Activated CD4-positive, alpha-beta T cell treated with anti-CD3 and anti-CD28 coated beads for 36 hours (primary cell): ENCODE measurements at regions of chr2 and their contacts with region 1.

Region 1: GRCh38 chr2:110865188-110865587 is 132.8 kb downstream of the ACOXL start:
- DNase-seq: peak; percentile 67
- ATAC-seq: peak; percentile 80
- H3K4me3 Mint-ChIP-seq: no peak overlapping the region
- H3K27ac Mint-ChIP-seq: no peak overlapping the region
- H3K4me1 Mint-ChIP-seq: peaks cover 46% of the 10 kb centered on the region
- H3K27me3 Mint-ChIP-seq: peaks cover 54% of the 10 kb centered on the region

Region 2: GRCh38 chr2:110677530-110678456 is 187.4 kb before region 1 on chr2 and contains the start of gene BUB1:
- CTCF ChIA-PET with region 1: no interaction called
- POLR2A ChIA-PET with region 1: no interaction called
- intact Hi-C with region 1: loop called in 1 of 2 experiments (anchors 5 kb)
- DNase-seq: peak; percentile 98
- ATAC-seq: peak; percentile 99
- H3K4me3 Mint-ChIP-seq: peak within 1 kb of the TSS; percentile 96
- H3K27ac Mint-ChIP-seq: peak within 1 kb of the TSS; percentile 97
- H3K4me1 Mint-ChIP-seq: peaks cover 30% of the 10 kb centered on the region
- H3K27me3 Mint-ChIP-seq: peaks cover 4% of the 10 kb centered on the region
- total RNA-seq, gene BUB1: 93.5 to 115 TPM

Region 3: GRCh38 chr2:110804915-110805314 is 60.3 kb before region 1 on chr2:
- CTCF ChIA-PET with region 1: no interaction called
- POLR2A ChIA-PET with region 1: no interaction called
- intact Hi-C with region 1: loop called (anchors 1 to 5 kb)
- DNase-seq: peak; percentile 80
- ATAC-seq: peak; percentile 99
- H3K4me3 Mint-ChIP-seq: no peak overlapping the region
- H3K27ac Mint-ChIP-seq: no peak overlapping the region
- H3K4me1 Mint-ChIP-seq: peaks cover 15% of the 10 kb centered on the region
- H3K27me3 Mint-ChIP-seq: peaks cover 57% of the 10 kb centered on the region

Region 4: DNA sequence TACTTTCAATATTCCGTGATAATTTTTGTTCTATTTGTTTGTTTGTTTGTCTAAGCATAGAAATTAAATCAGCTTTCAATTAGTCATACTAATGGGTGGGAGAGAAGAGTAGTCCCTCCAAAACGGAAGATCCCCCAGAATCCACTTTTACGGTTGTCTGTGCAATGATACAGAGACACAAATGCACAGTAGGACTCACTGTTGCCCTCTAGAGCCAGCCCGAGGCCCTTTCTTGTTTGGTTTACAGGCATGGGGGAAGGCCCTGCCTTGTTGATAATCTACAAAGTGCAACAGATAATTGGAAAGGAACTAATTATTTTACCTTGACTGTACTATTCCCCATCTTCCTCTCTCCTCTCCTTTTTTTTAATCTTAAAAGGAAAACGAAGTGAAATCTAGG is 11.7 kb before region 1 on chr2:
- CTCF ChIA-PET with region 1: interaction called, 5 read pairs
- POLR2A ChIA-PET with region 1: interaction called, 7 read pairs
- intact Hi-C with region 1: loop called (anchors 1 to 2 kb)
- DNase-seq: peak; percentile 79
- ATAC-seq: peak; percentile 53
- H3K4me3 Mint-ChIP-seq: no peak overlapping the region
- H3K27ac Mint-ChIP-seq: no peak overlapping the region
- H3K4me1 Mint-ChIP-seq: peaks cover 45% of the 10 kb centered on the region
- H3K27me3 Mint-ChIP-seq: peaks cover 61% of the 10 kb centered on the region

Region 5: GRCh38 chr2:110886826-110887573 is 21.8 kb after region 1 on chr2:
- CTCF ChIA-PET with region 1: no interaction called
- POLR2A ChIA-PET with region 1: no interaction called
- intact Hi-C with region 1: no loop called
- DNase-seq: no peak
- ATAC-seq: no peak
- H3K4me3 Mint-ChIP-seq: no peak overlapping the region
- H3K27ac Mint-ChIP-seq: no peak overlapping the region
- H3K4me1 Mint-ChIP-seq: no peaks in the 10 kb centered on the region
- H3K27me3 Mint-ChIP-seq: peaks cover 25% of the 10 kb centered on the region

Region 6: GRCh38 chr2:111091811-111092211 is 226.6 kb after region 1 on chr2:
- CTCF ChIA-PET with region 1: no interaction called
- POLR2A ChIA-PET with region 1: no interaction called
- intact Hi-C with region 1: loop called (anchors 1 to 5 kb)
- DNase-seq: peak; percentile 42
- ATAC-seq: peak; percentile 98
- H3K4me3 Mint-ChIP-seq: no peak overlapping the region
- H3K27ac Mint-ChIP-seq: no peak overlapping the region
- H3K4me1 Mint-ChIP-seq: peaks cover 16% of the 10 kb centered on the region
- H3K27me3 Mint-ChIP-seq: peaks cover 50% of the 10 kb centered on the region